Activated CD4-positive, alpha-beta memory T cell treated with anti-CD3 and anti-CD28 coated beads for 36 hours (primary cell): ENCODE measurements at regions of chr9 and their contacts with region 1.

Region 1: GRCh38 chr9:136944519-136945279 is at the starts of genes C8G and FBXW5:
- DNase-seq: peak; percentile 96
- H3K4me3 Mint-ChIP-seq: peak within 1 kb of the TSS; percentile 80
- H3K27ac Mint-ChIP-seq: peak within 1 kb of the TSS; percentile 86
- H3K4me1 Mint-ChIP-seq: peaks cover 12% of the 10 kb centered on the region
- H3K27me3 Mint-ChIP-seq: no peaks in the 10 kb centered on the region
- total RNA-seq, gene C8G: 0.90 to 0.94 TPM
- total RNA-seq, gene FBXW5: 66.8 to 69.4 TPM

Region 2: GRCh38 chr9:136742591-136743391 is 201.9 kb before region 1 on chr9 and contains the start of gene LCN10:
- CTCF ChIA-PET with region 1: no interaction called
- POLR2A ChIA-PET with region 1: no interaction called
- intact Hi-C with region 1: no loop called
- DNase-seq: no peak
- H3K4me3 Mint-ChIP-seq: peak within 1 kb of the TSS; percentile 49
- H3K27ac Mint-ChIP-seq: no peak within 1 kb of the TSS
- H3K4me1 Mint-ChIP-seq: peaks cover 12% of the 10 kb centered on the region
- H3K27me3 Mint-ChIP-seq: no peaks in the 10 kb centered on the region
- total RNA-seq, gene LCN10: 1.2 to 1.5 TPM

Region 3: DNA sequence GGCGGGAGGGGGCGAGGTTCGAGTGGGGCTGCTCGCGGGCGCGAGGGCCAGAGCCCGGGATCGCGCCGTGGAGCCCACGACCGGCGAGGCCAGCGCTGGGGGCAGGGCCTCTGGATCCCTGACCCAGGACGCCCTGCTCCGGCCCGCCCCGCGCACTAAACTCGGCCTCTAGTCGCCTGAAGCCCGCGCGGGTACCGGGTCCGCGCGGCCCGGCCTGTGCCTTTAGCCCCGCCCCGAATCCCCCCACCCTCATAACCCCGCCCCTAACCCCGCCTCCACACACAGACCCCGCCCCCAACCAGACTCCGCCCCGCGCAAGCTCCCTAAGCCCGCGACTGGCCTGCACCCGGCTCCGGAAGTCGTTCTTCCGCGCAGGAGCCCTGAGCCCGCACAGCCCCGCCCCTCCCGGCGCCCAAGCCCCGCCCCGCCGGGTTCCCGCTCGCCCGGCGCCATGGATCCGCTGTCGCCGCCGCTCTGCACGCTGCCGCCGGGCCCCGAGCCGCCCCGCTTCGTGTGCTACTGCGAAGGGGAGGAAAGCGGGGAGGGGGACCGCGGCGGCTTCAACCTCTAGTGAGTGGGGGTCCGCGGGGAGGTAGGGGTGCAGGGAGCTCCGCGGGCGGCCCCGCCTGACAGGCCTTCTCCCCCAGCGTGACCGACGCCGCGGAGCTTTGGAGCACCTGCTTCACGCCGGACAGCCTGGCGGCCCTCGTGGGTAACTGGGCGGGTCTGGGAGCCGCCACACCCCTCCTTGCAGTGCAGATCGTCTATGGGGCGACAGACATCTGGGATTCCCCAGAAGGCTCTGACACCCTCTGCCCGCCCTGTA is 47.5 kb after region 1 on chr9 and contains the start of gene PAXX:
- CTCF ChIA-PET with region 1: interaction called, 7 read pairs
- POLR2A ChIA-PET with region 1: interaction called, 3 read pairs
- intact Hi-C with region 1: loop called (anchors 5 kb)
- DNase-seq: peak; percentile 96
- H3K4me3 Mint-ChIP-seq: peak within 1 kb of the TSS; percentile 82
- H3K27ac Mint-ChIP-seq: peak within 1 kb of the TSS; percentile 79
- H3K4me1 Mint-ChIP-seq: peaks cover 18% of the 10 kb centered on the region
- H3K27me3 Mint-ChIP-seq: peaks cover 4% of the 10 kb centered on the region
- total RNA-seq, gene PAXX: 71.0 to 71.2 TPM

Region 4: DNA sequence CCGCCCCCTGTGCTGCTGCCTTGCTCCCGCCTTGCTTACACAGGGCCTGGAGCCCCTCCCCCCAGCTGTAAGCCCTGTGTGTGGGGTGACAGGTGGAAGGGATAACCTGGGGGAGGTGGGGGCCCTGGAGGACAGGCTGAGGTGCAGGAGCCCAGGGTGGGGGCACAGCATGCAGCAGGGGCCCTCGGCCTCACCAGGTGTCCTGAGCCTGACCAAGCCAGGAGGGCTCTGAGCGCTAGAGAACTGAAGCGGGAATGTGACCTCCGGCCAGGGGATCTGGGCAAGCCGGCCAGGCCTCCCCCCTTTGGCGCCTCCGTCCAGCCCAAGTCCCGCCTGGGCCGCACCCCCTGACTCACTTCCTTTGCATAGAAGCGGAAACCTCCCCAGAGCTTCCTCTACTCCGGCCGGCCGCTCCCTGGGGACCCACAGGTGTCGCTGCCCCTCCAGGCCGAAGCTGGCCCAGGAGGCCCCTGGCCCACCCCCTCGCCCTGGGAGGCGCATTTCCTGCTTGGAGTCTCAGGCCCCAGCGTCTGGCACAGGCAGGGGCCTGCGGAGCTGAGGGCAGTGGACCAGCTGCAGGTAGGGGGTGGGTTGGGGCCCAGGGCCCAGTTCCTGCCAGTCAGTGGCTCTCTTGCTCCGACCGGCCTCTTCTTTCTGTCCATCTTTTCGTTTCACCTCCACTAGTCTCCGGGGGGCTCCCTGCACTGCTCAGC is 332.8 kb after region 1 on chr9 and contains the start of gene TOR4A:
- CTCF ChIA-PET with region 1: no interaction called
- POLR2A ChIA-PET with region 1: no interaction called
- intact Hi-C with region 1: no loop called
- DNase-seq: peak; percentile 67
- H3K4me3 Mint-ChIP-seq: peak within 1 kb of the TSS; percentile 75
- H3K27ac Mint-ChIP-seq: peak within 1 kb of the TSS; percentile 46
- H3K4me1 Mint-ChIP-seq: peaks cover 8% of the 10 kb centered on the region
- H3K27me3 Mint-ChIP-seq: no peaks in the 10 kb centered on the region
- total RNA-seq, gene TOR4A: 6.6 to 6.8 TPM